ENCODE measurements at regions of chr22 and their contacts with region 1.

Region 1: DNA sequence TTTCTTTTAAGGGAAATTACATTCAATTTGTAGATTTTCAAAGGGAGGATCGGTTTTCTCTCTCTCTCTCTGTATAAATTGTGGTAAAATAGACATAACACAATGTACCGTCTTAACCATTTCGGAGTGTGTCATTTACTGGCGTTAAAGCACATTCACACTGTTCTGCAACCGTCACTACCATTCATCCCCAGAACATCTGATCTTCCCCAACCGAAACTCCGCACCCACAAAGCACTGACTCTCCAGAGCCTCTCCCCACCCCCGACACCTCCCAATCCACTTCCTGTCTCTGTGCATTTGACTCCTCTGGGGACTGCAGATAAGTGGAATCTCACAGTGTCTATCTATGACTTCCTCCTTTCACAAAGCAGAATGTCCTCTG is 15.9 kb upstream of the GRAMD4 start:
- DNase-seq: peak; percentile 67
- H3K4me3 Mint-ChIP-seq: peak overlapping the region; percentile 75
- H3K27ac Mint-ChIP-seq: peak overlapping the region; percentile 91
- H3K4me1 Mint-ChIP-seq: peaks cover 19% of the 10 kb centered on the region
- H3K27me3 Mint-ChIP-seq: peaks cover 2% of the 10 kb centered on the region

Region 2: GRCh38 chr22:46522797-46523196 is 81.5 kb before region 1 on chr22:
- intact Hi-C with region 1: no loop called
- DNase-seq: no peak
- H3K4me3 Mint-ChIP-seq: no peak overlapping the region
- H3K27ac Mint-ChIP-seq: no peak overlapping the region
- H3K4me1 Mint-ChIP-seq: no peaks in the 10 kb centered on the region
- H3K27me3 Mint-ChIP-seq: no peaks in the 10 kb centered on the region

Region 3: GRCh38 chr22:46563381-46564083 is 40.8 kb before region 1 on chr22:
- intact Hi-C with region 1: no loop called
- DNase-seq: peak; percentile 68
- H3K4me3 Mint-ChIP-seq: no peak overlapping the region
- H3K27ac Mint-ChIP-seq: no peak overlapping the region
- H3K4me1 Mint-ChIP-seq: peaks cover 8% of the 10 kb centered on the region
- H3K27me3 Mint-ChIP-seq: no peaks in the 10 kb centered on the region

Region 4: GRCh38 chr22:46576556-46577367 is 27.5 kb before region 1 on chr22:
- intact Hi-C with region 1: loop called (anchors 1 kb)
- DNase-seq: peak; percentile 58
- H3K4me3 Mint-ChIP-seq: peak overlapping the region; percentile 77
- H3K27ac Mint-ChIP-seq: no peak overlapping the region
- H3K4me1 Mint-ChIP-seq: peaks cover 38% of the 10 kb centered on the region
- H3K27me3 Mint-ChIP-seq: no peaks in the 10 kb centered on the region

Region 5: GRCh38 chr22:46592390-46592872 is 11.9 kb before region 1 on chr22:
- intact Hi-C with region 1: loop called (anchors 1 kb)
- DNase-seq: peak; percentile 55
- H3K4me3 Mint-ChIP-seq: peak overlapping the region; percentile 78
- H3K27ac Mint-ChIP-seq: peak overlapping the region; percentile 81
- H3K4me1 Mint-ChIP-seq: peaks cover 24% of the 10 kb centered on the region
- H3K27me3 Mint-ChIP-seq: no peaks in the 10 kb centered on the region

Region 6: GRCh38 chr22:46953968-46954765 is 349.9 kb after region 1 on chr22:
- intact Hi-C with region 1: no loop called
- DNase-seq: no peak
- H3K4me3 Mint-ChIP-seq: no peak overlapping the region
- H3K27ac Mint-ChIP-seq: no peak overlapping the region
- H3K4me1 Mint-ChIP-seq: no peaks in the 10 kb centered on the region
- H3K27me3 Mint-ChIP-seq: no peaks in the 10 kb centered on the region

Measured in activated T-helper 1 cell treated with anti-CD3 and anti-CD28 coated beads, Interleukin-12 subunit alpha, Interleukin-12 subunit beta, Interleukin-2, Interleukin-4 antibody, amounts not matched to agents 30 ng/mL and 10 ng/mL and 1 ng/mL, durations not matched to agents 14 hours and 24 hours and 36 hours (primary cell).